GM18951 (cell line): ENCODE measurements at regions of chr11 and their contacts with region 1.

Region 1: DNA sequence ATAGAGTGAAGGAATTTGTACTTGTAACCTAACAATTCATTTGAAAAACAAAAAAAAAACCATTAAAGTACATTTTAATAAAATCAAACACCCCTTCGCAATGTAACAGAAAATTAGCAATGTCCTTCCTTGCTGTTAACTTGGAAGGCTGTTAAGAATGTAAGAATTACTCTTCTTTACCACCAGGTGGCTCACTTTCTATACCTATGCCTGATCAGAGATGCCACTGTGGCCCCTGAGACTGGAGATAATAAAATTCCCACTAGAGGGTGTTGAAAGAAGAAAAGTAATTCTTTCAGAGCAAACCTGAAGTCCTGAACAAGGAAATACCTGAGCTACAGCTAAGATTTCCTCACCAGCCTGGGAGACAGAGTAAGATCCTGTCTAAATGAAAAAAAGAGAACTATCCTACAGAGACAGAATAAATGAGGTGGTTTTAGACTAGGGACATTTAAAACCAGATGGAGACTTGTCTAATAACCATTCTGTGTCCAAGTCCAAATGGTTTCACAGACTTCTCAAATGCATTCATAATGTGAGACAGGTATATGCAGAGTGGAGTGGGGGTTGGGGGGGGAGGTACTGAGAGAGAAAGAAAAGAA is 1089.3 kb downstream of the FAM181B start:
- POLR2A ChIP-seq: no peak

Region 2: DNA sequence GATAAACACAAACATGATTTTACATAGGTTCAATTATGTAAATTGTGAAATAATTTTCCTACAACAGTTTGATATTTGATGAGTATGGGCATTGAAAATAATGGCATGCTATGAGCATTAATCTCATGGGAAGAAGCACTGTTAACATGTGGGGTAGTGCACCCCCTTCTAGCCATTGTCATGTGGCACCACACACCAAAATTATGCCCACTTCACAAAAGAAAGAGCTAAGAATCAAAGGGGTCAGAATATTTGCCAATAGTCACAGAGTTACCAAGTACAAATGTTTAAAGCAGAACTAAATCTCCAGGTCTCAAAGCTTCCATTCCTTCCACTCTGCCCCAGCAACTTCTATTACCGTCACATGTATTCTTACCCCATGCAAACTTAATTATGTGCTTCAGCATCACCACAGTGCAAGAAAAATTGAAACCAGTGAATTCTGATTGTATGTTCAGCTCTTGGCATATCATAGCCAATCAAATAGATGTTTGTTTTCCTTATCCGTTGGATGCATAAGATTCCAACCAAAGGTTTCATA is 184.5 kb before region 1 on chr11:
- in situ Hi-C with region 1: no loop called
- POLR2A ChIP-seq: no peak

Region 3: GRCh38 chr11:81829976-81830375 is 185.6 kb after region 1 on chr11:
- in situ Hi-C with region 1: no loop called
- POLR2A ChIP-seq: no peak

Region 4: GRCh38 chr11:82229341-82229740 is 585.0 kb after region 1 on chr11:
- in situ Hi-C with region 1: loop called (anchors 25 kb)
- POLR2A ChIP-seq: no peak

Region 5: GRCh38 chr11:82682003-82682751 is 1037.8 kb after region 1 on chr11:
- in situ Hi-C with region 1: loop called (anchors 25 kb)
- POLR2A ChIP-seq: no peak